ENCODE measurements at regions of chr2 and their contacts with region 1.

Region 1: GRCh38 chr2:125386074-125386473 is 1269.9 kb upstream of the GYPC start:
- DNase-seq: no peak
- H3K4me3 ChIP-seq: no peak overlapping the region
- H3K27ac ChIP-seq: no peak overlapping the region
- H3K4me1 ChIP-seq: no peaks in the 10 kb centered on the region
- H3K27me3 ChIP-seq: no peaks in the 10 kb centered on the region
- CTCF ChIP-seq: no peak
- EP300 ChIP-seq: no peak
- POLR2A ChIP-seq: no peak

Region 2: GRCh38 chr2:125397535-125398251 is 11.6 kb after region 1 on chr2:
- in situ Hi-C with region 1: no loop called
- intact Hi-C with region 1: loop called (anchors 1 kb)
- DNase-seq: no peak
- H3K4me3 ChIP-seq: no peak overlapping the region
- H3K27ac ChIP-seq: no peak overlapping the region
- H3K4me1 ChIP-seq: no peaks in the 10 kb centered on the region
- H3K27me3 ChIP-seq: no peaks in the 10 kb centered on the region
- CTCF ChIP-seq: no peak
- EP300 ChIP-seq: no peak
- POLR2A ChIP-seq: no peak

Region 3: DNA sequence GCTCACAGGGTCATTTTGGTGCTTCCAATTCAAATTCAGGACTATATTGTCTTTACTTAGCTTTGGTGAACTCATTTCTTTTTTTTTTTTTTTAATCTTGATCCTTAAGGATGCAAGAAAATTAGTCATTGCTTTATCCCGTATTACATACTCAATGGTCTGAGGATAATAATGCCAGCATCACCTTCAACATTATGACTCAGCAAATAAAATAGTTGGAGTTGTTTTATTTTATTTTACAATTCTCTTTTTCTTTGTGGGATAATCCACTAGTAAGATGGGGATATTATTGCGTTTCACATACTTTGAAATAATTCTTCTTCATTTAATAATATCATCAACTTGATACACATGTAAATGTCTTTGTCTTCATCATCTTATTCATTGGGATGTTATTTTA is 315.0 kb after region 1 on chr2:
- in situ Hi-C with region 1: no loop called
- intact Hi-C with region 1: loop called (anchors 5 kb)
- DNase-seq: no peak
- H3K4me3 ChIP-seq: no peak overlapping the region
- H3K27ac ChIP-seq: no peak overlapping the region
- H3K4me1 ChIP-seq: peaks cover 0 to 11% (median 0%) of the 10 kb centered on the region in 4 donors
- H3K27me3 ChIP-seq: no peaks in the 10 kb centered on the region
- CTCF ChIP-seq: no peak
- EP300 ChIP-seq: no peak
- POLR2A ChIP-seq: no peak

Measured in transverse colon (tissue), 4 donors.